Dorsolateral prefrontal cortex (tissue), 120 donors: ENCODE measurements at regions of chr22 and their contacts with region 1.

Region 1: GRCh38 chr22:39388261-39389011 is 11.1 kb upstream of the TAB1 start:
- DNase-seq: peak; percentile 52 to 96 (median 80)
- H3K4me3 ChIP-seq: peak overlapping the region; percentile 40 to 80 (median 64)
- H3K27ac ChIP-seq: peak overlapping the region in 8 of 59 donors; percentile 18 to 99 (median 47)
- H3K27me3 ChIP-seq: no peaks in the 10 kb centered on the region
- CTCF ChIP-seq: no peak

Region 2: DNA sequence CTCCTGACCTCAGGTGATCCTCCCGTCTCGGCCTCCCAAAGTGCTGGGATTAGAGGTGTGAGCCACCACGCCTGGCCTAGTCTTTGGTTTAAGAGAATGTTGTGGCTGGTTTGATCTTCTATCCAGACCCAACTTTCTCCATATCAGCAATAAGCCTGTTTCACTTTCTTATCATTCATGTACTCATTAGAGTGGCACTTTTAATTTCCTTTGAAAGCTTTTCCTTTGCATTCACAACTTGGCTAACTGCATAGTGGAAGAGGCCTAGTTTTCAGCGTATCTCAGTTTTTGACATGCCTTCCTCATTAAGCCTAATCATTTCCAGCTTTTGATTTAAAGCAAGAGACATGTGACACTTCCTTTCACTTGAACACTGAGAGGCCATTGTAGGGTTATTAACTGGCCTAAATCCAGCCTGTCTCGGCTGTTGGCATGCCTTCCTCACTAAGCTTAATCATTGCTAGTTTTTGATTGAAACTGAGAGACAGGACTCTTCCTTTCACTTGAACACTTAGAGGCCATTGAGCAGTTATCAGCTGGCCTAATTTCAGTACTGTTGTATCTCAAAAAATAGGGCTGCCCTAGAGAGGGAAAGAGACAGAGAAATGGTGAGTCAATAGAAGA is 55.9 kb before region 1 on chr22:
- intact Hi-C with region 1: no loop called
- DNase-seq: no peak
- H3K4me3 ChIP-seq: peak overlapping the region in 2 of 59 donors; percentile 4 to 20
- H3K27ac ChIP-seq: peak overlapping the region in 49 of 59 donors; percentile 8 to 81 (median 61)
- H3K27me3 ChIP-seq: no peaks in the 10 kb centered on the region
- CTCF ChIP-seq: no peak

Region 3: GRCh38 chr22:39349506-39349966 is 38.9 kb before region 1 on chr22:
- intact Hi-C with region 1: loop called in 1 of 2 experiments (anchors 5 kb)
- DNase-seq: peak in 5 of 10 donors; percentile 22 to 74 (median 32)
- H3K4me3 ChIP-seq: peak overlapping the region; percentile 58 to 94 (median 83)
- H3K27ac ChIP-seq: peak overlapping the region; percentile 63 to 98 (median 91)
- H3K27me3 ChIP-seq: no peaks in the 10 kb centered on the region
- CTCF ChIP-seq: no peak